ENCODE measurements at regions of chr10 and their contacts with region 1.

Region 1: GRCh38 chr10:73537288-73537687 is 41.5 kb upstream of the PPP3CB start:
- DNase-seq: peak in 1 of 35 experiments; percentile 20
- ATAC-seq: peak in 3 of 4 experiments; percentile 19 to 71 (median 53)
- H3K4me3 ChIP-seq: no peak overlapping the region
- H3K4me3 Mint-ChIP-seq: no peak overlapping the region
- H3K27ac ChIP-seq: no peak overlapping the region
- H3K27ac Mint-ChIP-seq: no peak overlapping the region
- H3K4me1 ChIP-seq: peaks cover 2 to 8% of the 10 kb centered on the region in 2 experiments
- H3K4me1 Mint-ChIP-seq: peaks cover 10 to 20% (median 16%) of the 10 kb centered on the region in 3 donors
- H3K27me3 ChIP-seq: no peaks in the 10 kb centered on the region
- H3K27me3 Mint-ChIP-seq: peaks cover 0 to 9% of the 10 kb centered on the region in 2 donors

Region 2: GRCh38 chr10:73506491-73506890 is 30.8 kb before region 1 on chr10:
- CTCF ChIA-PET with region 1: no interaction called
- POLR2A ChIA-PET with region 1: no interaction called
- DNase-seq: no peak
- ATAC-seq: no peak
- H3K4me3 ChIP-seq: no peak overlapping the region
- H3K4me3 Mint-ChIP-seq: no peak overlapping the region
- H3K27ac ChIP-seq: no peak overlapping the region
- H3K27ac Mint-ChIP-seq: no peak overlapping the region
- H3K4me1 ChIP-seq: peaks cover under 1 to 4% of the 10 kb centered on the region in 2 experiments
- H3K4me1 Mint-ChIP-seq: peaks cover 7 to 16% (median 14%) of the 10 kb centered on the region in 3 donors
- H3K27me3 ChIP-seq: no peaks in the 10 kb centered on the region
- H3K27me3 Mint-ChIP-seq: no peaks in the 10 kb centered on the region

Region 3: GRCh38 chr10:73552819-73553715 is 15.8 kb after region 1 on chr10:
- CTCF ChIA-PET with region 1: no interaction called
- POLR2A ChIA-PET with region 1: interaction called in 1 of 2 experiments, 13 read pairs
- DNase-seq: no peak
- ATAC-seq: no peak
- H3K4me3 ChIP-seq: no peak overlapping the region
- H3K4me3 Mint-ChIP-seq: no peak overlapping the region
- H3K27ac ChIP-seq: no peak overlapping the region
- H3K27ac Mint-ChIP-seq: no peak overlapping the region
- H3K4me1 ChIP-seq: no peaks in the 10 kb centered on the region
- H3K4me1 Mint-ChIP-seq: no peaks in the 10 kb centered on the region
- H3K27me3 ChIP-seq: no peaks in the 10 kb centered on the region
- H3K27me3 Mint-ChIP-seq: no peaks in the 10 kb centered on the region

Region 4: DNA sequence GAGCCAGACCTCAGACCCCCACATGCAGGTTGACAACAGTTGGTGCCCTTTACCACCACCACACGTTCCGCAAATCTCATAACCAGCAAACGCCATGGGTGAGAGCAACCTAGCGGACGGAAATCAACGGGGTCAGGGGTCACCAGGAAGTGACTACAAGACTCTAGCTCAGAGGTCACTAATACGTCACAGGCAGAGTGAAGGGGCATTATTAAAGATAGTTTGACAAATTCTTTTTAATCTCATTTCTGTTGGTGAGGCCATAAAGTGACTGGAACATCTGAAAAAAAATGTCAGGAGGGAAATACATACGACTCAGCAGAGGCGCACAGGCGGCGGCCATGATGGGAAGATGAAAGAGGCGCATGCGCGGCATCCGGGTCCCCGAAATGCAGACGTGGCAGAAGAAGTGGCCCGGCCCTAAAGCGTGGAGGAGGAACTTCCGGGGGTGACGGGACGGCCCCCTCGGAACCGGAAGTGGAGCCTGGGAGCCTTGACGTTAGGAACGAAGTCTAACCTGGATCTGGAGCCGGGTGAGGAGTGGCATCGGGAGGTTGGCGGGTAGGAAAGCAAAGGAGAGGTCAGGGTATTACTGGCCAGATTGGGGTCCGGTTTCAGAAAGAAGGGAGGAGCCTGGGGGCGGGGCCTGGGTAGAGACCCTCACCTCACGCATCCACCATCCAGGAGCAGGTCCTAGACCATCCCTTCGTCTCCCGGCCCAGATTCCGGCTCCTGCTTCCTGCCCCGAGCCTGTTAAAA is 206.8 kb after region 1 on chr10 and contains the start of gene SEC24C:
- CTCF ChIA-PET with region 1: no interaction called
- POLR2A ChIA-PET with region 1: no interaction called
- DNase-seq: peak; percentile 86 to 99 (median 94)
- ATAC-seq: peak; percentile 91 to 93 (median 92)
- H3K4me3 ChIP-seq: peak within 1 kb of the TSS; percentile 85 to 100
- H3K4me3 Mint-ChIP-seq: peak within 1 kb of the TSS; percentile 95 to 100 (median 100)
- H3K27ac ChIP-seq: peak within 1 kb of the TSS; percentile 89
- H3K27ac Mint-ChIP-seq: peak within 1 kb of the TSS; percentile 100
- H3K4me1 ChIP-seq: peaks cover 15 to 32% of the 10 kb centered on the region in 2 experiments
- H3K4me1 Mint-ChIP-seq: peaks cover 34 to 43% (median 37%) of the 10 kb centered on the region in 3 donors
- H3K27me3 ChIP-seq: no peaks in the 10 kb centered on the region
- H3K27me3 Mint-ChIP-seq: no peaks in the 10 kb centered on the region
- total RNA-seq, gene SEC24C: 77.7 to 107 (median 92.2) TPM

Measured in T-cell (primary cell).